Endothelial cell of umbilical vein (primary cell): ENCODE measurements at regions of chr10 and their contacts with region 1.

Region 1: GRCh38 chr10:67884313-67884841 is at the start of gene SIRT1:
- DNase-seq: peak; percentile 96
- H3K4me3 ChIP-seq: peak within 1 kb of the TSS; percentile 95 to 97 (median 96)
- H3K27ac ChIP-seq: peak within 1 kb of the TSS; percentile 68
- H3K4me1 ChIP-seq: peaks cover 11% of the 10 kb centered on the region
- H3K27me3 ChIP-seq: no peaks in the 10 kb centered on the region
- CTCF ChIP-seq: no peak
- POLR2A ChIP-seq: peak; percentile 96
- total RNA-seq, gene SIRT1: 14.8 and 15.1 TPM in 2 replicates

Region 2: DNA sequence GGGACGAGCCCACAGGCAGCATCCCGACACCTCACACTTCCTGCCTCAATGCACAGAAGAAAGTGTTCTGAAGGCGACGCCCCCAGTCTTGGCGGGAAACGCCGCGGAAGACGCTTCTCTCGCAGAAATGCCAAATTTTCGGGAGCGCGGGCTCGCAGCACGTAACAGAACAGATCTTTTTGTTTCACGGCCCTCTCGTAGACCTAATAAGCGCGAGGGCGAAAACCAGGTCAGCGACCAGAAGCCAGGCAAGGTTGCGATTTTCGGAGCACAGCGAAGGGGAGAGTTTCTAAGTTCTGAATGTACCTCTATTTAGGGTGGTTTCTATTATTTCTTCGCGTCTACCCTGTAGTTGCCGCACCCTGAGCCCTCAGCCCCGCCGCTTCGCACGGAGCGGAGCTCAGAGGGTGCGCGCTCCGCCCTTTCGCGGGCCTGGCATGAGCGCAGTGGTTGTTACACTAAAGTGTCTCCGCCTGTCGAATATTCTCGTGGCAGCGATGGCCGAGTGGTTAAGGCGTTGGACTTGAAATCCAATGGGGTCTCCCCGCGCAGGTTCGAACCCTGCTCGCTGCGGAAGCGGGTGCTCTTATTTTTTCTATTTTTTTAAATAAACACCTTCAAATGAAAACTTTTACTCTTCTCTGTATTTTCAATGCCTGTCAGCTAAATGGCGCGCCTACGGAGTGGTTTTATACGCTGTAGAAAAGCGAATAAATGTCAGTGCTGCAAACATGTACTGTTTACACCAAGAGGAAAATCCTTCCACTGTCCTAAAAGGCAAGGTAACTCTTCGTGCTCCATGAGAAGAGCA is 120.2 kb before region 1 on chr10:
- CTCF ChIA-PET with region 1: no interaction called
- POLR2A ChIA-PET with region 1: no interaction called
- dilution Hi-C with region 1: no loop called
- intact Hi-C with region 1: loop called (anchors 1 kb)
- DNase-seq: peak; percentile 98
- H3K4me3 ChIP-seq: peak overlapping the region; percentile 90 to 96 (median 92)
- H3K27ac ChIP-seq: peak overlapping the region; percentile 82
- H3K4me1 ChIP-seq: peaks cover 3% of the 10 kb centered on the region
- H3K27me3 ChIP-seq: peaks cover 3 to 5% of the 10 kb centered on the region in 2 experiments
- CTCF ChIP-seq: no peak
- POLR2A ChIP-seq: no peak

Region 3: DNA sequence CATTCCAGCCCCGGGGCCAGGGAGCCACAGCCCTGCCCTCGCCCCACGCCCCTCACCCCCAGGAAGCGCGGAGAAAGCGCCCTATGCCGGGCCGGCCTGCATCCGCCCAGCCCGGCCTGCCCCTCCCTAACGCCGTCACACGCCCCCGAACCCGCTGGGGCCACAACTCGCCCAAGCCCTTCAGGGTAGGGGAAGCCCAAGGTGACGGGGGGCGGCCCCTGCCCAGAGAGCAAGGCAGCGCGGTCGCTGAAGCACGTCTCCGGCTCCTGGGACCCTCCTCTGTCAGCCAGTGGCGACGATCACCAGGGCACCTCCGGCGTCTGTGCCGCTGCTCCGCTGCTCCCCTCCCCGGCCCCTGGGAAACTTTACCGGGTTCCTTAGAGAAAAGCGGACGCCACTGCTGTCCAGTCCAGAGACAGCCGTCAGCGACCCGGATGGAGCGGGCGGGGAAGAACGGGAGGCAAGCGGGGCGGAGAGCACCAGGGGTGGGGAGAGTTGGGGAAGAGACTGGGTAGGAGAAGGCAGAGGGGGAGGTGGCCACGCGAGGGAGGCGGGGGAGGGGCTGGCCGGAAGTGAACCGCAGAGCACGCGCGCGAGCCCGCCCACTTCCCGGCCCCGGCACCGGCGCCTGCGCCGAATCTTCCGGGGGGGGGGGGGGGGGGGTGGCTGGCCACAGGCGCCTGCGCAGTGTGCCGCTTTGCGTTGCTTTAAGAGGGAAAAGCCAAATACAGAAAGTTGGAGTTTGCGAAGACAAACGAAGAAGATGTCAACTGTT is 190.6 kb after region 1 on chr10 and contains the start of gene HERC4:
- CTCF ChIA-PET with region 1: no interaction called
- POLR2A ChIA-PET with region 1: no interaction called
- dilution Hi-C with region 1: no loop called
- intact Hi-C with region 1: loop called (anchors 1 kb)
- DNase-seq: peak; percentile 88
- H3K4me3 ChIP-seq: peak within 1 kb of the TSS; percentile 95 to 99 (median 96)
- H3K27ac ChIP-seq: peak within 1 kb of the TSS; percentile 95
- H3K4me1 ChIP-seq: peaks cover 32% of the 10 kb centered on the region
- H3K27me3 ChIP-seq: no peaks in the 10 kb centered on the region
- CTCF ChIP-seq: no peak
- POLR2A ChIP-seq: peak; percentile 54
- total RNA-seq, gene HERC4: 68.7 and 73.7 TPM in 2 replicates

Region 4: DNA sequence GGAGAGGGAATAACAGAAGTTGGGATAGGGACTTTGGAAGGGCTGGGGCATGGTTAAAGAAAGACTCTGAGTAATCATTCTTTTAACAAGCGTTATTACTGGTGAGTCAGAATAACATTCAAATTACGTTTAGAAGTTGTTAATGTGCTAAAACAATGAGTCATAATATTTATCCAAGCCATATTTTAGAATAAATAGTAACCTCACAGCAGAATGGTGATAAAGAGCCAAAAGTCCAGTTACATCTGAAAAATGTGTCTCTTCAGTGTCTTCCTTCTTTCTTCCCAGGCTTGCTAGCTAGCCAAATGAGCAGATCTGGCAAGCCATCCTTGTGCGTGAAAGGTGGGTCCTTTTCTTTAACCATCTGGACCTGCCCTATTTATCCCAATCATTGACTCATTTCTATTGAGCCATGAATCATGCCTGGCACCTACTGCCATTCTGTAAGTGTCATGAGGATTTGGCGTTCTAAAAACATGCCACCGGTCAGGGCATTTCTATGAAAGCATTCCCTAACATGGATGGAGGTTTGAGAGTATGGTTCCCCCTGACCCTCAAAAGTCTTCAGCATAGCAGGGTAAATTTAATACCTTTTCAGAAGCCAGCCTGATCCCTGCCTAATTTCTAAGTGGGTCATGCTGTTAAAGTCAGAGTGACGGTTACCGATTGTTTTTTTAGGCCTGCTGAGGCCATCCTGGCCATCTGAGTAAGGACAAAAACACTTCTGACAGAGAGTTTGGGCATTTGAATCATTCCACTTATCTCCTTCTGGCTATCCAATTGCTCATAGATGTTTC is 251.7 kb after region 1 on chr10:
- CTCF ChIA-PET with region 1: no interaction called
- POLR2A ChIA-PET with region 1: no interaction called
- dilution Hi-C with region 1: no loop called
- intact Hi-C with region 1: loop called (anchors 1 kb)
- DNase-seq: peak; percentile 92
- H3K4me3 ChIP-seq: peak overlapping the region in 1 of 3 experiments; percentile 28
- H3K27ac ChIP-seq: peak overlapping the region; percentile 96
- H3K4me1 ChIP-seq: peaks cover 35% of the 10 kb centered on the region
- H3K27me3 ChIP-seq: no peaks in the 10 kb centered on the region
- CTCF ChIP-seq: no peak
- POLR2A ChIP-seq: peak; percentile 39

Region 5: GRCh38 chr10:68331455-68332258 is 447.3 kb after region 1 on chr10 and contains the start of gene HNRNPH3:
- CTCF ChIA-PET with region 1: no interaction called
- POLR2A ChIA-PET with region 1: no interaction called
- dilution Hi-C with region 1: no loop called
- intact Hi-C with region 1: loop called (anchors 1 kb)
- DNase-seq: peak; percentile 98
- H3K4me3 ChIP-seq: peak within 1 kb of the TSS; percentile 95 to 100 (median 99)
- H3K27ac ChIP-seq: peak within 1 kb of the TSS; percentile 91
- H3K4me1 ChIP-seq: peaks cover 15% of the 10 kb centered on the region
- H3K27me3 ChIP-seq: no peaks in the 10 kb centered on the region
- CTCF ChIP-seq: no peak
- POLR2A ChIP-seq: peak; percentile 98
- total RNA-seq, gene HNRNPH3: 146 and 151 TPM in 2 replicates